ENCODE measurements at regions of chr1 and their contacts with region 1.

Region 1: DNA sequence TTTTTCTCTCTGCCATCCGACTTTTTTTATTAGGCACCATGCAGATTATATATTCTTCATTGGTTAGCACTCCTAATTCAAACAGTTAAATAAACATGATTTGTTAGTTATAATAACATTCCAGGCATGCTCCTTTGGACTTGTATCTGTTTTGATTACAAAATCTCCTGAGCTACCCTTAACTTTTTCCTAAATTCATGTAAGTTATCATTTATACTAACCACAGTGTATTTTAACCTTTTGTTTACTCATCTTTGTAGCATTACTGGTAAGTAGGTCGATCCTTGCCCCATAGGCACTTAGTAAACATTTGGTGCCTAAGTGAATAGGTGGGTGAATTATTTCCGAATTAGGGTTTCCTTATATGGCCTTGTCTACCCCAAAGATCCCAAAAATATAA is 43.8 kb downstream of the MIER1 start:
- DNase-seq: no peak
- H3K4me3 Mint-ChIP-seq: no peak overlapping the region
- H3K27ac Mint-ChIP-seq: no peak overlapping the region
- H3K4me1 Mint-ChIP-seq: peaks cover 33% of the 10 kb centered on the region
- H3K27me3 Mint-ChIP-seq: no peaks in the 10 kb centered on the region

Region 2: GRCh38 chr1:66957938-66958337 is 10.6 kb before region 1 on chr1:
- intact Hi-C with region 1: loop called (anchors 1 kb)
- DNase-seq: no peak
- H3K4me3 Mint-ChIP-seq: no peak overlapping the region
- H3K27ac Mint-ChIP-seq: no peak overlapping the region
- H3K4me1 Mint-ChIP-seq: peaks cover 51% of the 10 kb centered on the region
- H3K27me3 Mint-ChIP-seq: no peaks in the 10 kb centered on the region

Region 3: DNA sequence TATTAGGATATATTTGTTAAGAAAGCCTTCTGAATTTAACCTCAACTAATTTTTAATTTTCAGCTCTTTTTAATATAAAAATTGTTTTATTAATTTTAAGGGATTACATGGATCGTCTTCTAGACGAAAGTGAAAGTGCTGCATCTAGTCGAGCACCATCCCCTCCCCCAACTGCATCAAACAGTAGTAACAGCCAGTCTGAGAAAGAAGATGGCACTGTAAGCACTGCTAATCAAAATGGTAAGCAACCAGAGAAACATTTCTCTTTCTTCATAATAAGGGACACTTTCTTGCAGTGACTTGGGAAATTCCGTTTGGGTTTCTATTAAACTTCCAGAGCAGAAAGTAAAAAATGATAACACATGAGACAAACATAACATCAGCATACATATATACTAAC is 13.1 kb after region 1 on chr1:
- intact Hi-C with region 1: loop called (anchors 2 kb)
- DNase-seq: peak; percentile 40
- H3K4me3 Mint-ChIP-seq: peak overlapping the region; percentile 69
- H3K27ac Mint-ChIP-seq: peak overlapping the region; percentile 75
- H3K4me1 Mint-ChIP-seq: peaks cover 35% of the 10 kb centered on the region
- H3K27me3 Mint-ChIP-seq: no peaks in the 10 kb centered on the region

Region 4: GRCh38 chr1:67053785-67054772 is 85.5 kb after region 1 on chr1 and contains the start of gene SLC35D1:
- intact Hi-C with region 1: no loop called
- DNase-seq: peak; percentile 75
- H3K4me3 Mint-ChIP-seq: peak within 1 kb of the TSS; percentile 93
- H3K27ac Mint-ChIP-seq: peak within 1 kb of the TSS; percentile 94
- H3K4me1 Mint-ChIP-seq: peaks cover 49% of the 10 kb centered on the region
- H3K27me3 Mint-ChIP-seq: peaks cover 6% of the 10 kb centered on the region
- total RNA-seq, gene SLC35D1: 20.4 and 20.5 TPM in 2 replicates